HepG2 (cell line): ENCODE measurements at regions of chr7 and their contacts with region 1.

Region 1: GRCh38 chr7:99997545-99998137 is 17.8 kb upstream of the ZKSCAN1 start:
- DNase-seq: peak; percentile 87
- ATAC-seq: peak; percentile 92
- H3K4me3 ChIP-seq: peak overlapping the region; percentile 20 to 59 (median 48); a peak in 5 of 6 replicates
- H3K27ac ChIP-seq: peak overlapping the region; percentile 95
- H3K4me1 ChIP-seq: peaks cover 91% of the 10 kb centered on the region
- H3K27me3 ChIP-seq: no peaks in the 10 kb centered on the region
- CTCF ChIP-seq: peak; percentile 66
- EP300 ChIP-seq: peak in 1 of 2 experiments; percentile 71; a peak in 2 of 4 replicates
- POLR2A ChIP-seq: peak; percentile 80
- RAD21 ChIP-seq: peak; percentile 76

Region 2: GRCh38 chr7:99331002-99331401 is 666.6 kb before region 1 on chr7:
- CTCF ChIA-PET with region 1: no interaction called
- POLR2A ChIA-PET with region 1: no interaction called
- in situ Hi-C with region 1: no loop called
- intact Hi-C with region 1: no loop called
- DNase-seq: no peak
- ATAC-seq: no peak
- H3K4me3 ChIP-seq: no peak overlapping the region
- H3K27ac ChIP-seq: no peak overlapping the region
- H3K4me1 ChIP-seq: peaks cover 40% of the 10 kb centered on the region
- H3K27me3 ChIP-seq: no peaks in the 10 kb centered on the region
- CTCF ChIP-seq: no peak
- EP300 ChIP-seq: no peak
- POLR2A ChIP-seq: no peak
- RAD21 ChIP-seq: no peak

Region 3: GRCh38 chr7:100015232-100016209 is 17.9 kb after region 1 on chr7 and contains the start of gene ZKSCAN1:
- CTCF ChIA-PET with region 1: interaction called, 7 read pairs
- POLR2A ChIA-PET with region 1: interaction called, 212 read pairs
- in situ Hi-C with region 1: no loop called
- intact Hi-C with region 1: loop called (anchors 2 kb)
- DNase-seq: peak; percentile 91
- ATAC-seq: peak; percentile 94
- H3K4me3 ChIP-seq: peak within 1 kb of the TSS; percentile 92 to 94 (median 93)
- H3K27ac ChIP-seq: peak within 1 kb of the TSS; percentile 93
- H3K4me1 ChIP-seq: peaks cover 82% of the 10 kb centered on the region
- H3K27me3 ChIP-seq: no peaks in the 10 kb centered on the region; a peak in 1 of 5 replicates
- CTCF ChIP-seq: peak; percentile 12; the same call in 1 of the 2 replicates
- EP300 ChIP-seq: no peak
- POLR2A ChIP-seq: peak; percentile 85 to 91
- RAD21 ChIP-seq: no peak
- total RNA-seq, gene ZKSCAN1: 60.6 and 64.5 TPM in 2 replicates

Region 4: DNA sequence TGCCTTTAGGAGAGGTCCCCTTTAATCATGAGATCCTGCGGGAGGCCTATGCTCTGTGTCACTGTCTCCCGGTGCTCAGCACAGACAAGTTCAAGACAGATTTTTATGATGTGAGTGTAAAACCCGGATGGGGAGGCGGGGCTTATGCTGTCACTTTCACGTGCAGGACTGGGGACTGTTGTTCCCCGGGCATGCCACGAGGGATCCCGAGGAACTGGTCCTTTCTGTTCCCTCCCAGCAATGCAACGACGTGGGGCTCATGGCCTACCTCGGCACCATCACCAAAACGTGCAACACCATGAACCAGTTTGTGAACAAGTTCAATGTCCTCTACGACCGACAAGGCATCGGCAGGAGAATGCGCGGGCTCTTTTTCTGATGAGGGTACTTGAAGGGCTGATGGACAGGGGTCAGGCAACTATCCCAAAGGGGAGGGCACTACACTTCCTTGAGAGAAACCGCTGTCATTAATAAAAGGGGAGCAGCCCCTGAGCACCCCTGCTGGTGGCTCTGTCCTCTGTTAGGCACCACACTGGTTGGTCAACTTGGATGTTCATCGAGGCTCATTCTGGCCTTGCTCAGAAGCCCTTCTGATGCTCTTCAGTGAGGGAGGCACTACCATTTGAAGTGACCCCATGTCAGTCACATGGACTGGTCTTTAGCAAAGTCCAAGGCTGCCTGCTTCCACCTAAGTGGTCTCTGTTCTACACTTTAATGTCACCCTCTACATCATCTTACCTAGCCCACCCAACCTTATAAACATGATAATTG is 94.0 kb after region 1 on chr7:
- CTCF ChIA-PET with region 1: no interaction called
- POLR2A ChIA-PET with region 1: no interaction called
- in situ Hi-C with region 1: no loop called
- intact Hi-C with region 1: no loop called
- DNase-seq: no peak
- ATAC-seq: peak; percentile 38
- H3K4me3 ChIP-seq: no peak overlapping the region
- H3K27ac ChIP-seq: no peak overlapping the region
- H3K4me1 ChIP-seq: peaks cover 38% of the 10 kb centered on the region
- H3K27me3 ChIP-seq: no peaks in the 10 kb centered on the region; a peak in 1 of 5 replicates
- CTCF ChIP-seq: no peak
- EP300 ChIP-seq: no peak
- POLR2A ChIP-seq: peak; percentile 13 to 45; a peak in 3 of 4 replicates
- RAD21 ChIP-seq: no peak